CD4-positive, alpha-beta memory T cell (primary cell): ENCODE measurements at regions of chrX and their contacts with region 1.

Region 1: DNA sequence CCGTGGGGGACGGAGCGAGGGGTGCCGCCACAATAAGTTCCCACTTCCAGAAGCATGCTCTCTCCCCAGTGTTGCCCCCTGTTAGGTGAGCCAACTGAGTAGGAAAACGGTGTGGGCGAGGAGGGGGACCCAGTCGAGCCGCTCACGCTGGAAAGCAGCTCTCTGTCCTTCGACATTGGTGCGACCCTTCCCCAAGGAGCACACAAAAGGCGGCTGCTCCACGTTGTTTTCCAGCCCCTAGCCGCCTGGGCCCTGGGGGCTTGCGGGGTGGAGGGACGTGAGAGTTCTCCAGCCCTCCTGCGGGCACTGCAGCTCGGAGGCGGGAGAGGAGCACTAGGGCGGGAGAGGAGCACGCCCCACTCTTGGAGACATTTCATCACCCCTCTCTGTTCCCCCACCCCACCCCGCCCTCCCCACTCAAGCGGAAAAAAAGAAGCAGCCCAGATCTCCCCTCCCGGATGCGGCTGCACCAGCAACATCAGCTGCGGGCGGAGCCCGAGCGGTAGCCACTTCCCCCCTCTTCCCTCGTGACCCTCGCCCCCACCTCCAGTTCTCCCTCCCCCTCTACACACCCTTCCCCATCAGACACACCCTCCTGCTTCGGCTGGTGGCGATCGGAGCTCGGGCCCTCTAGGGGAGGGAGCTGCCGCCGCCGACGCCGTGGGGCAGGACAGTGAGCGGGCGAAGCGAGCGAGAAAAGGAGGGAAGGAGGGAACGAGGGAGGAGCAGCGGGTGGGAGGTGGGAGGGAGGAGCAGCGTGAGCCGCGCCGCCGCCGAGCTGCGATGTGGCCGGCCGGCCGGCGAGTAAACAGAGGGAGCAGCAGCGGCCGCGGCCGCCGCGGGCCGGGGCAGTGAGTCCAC is at the start of gene DOCK11:
- DNase-seq: peak; percentile 79 to 90 (median 82)
- H3K4me3 ChIP-seq: peak within 1 kb of the TSS; percentile 83 to 91
- H3K4me3 Mint-ChIP-seq: peak within 1 kb of the TSS; percentile 95 to 100 (median 99)
- H3K27ac ChIP-seq: peak within 1 kb of the TSS; percentile 83
- H3K27ac Mint-ChIP-seq: peak within 1 kb of the TSS; percentile 94 to 99 (median 98)
- H3K4me1 ChIP-seq: peaks cover 36% of the 10 kb centered on the region
- H3K4me1 Mint-ChIP-seq: peaks cover 10 to 41% (median 22%) of the 10 kb centered on the region in 4 donors
- H3K27me3 ChIP-seq: no peaks in the 10 kb centered on the region
- H3K27me3 Mint-ChIP-seq: no peaks in the 10 kb centered on the region
- total RNA-seq, gene DOCK11: 110 to 112 TPM

Region 2: GRCh38 chrX:118508635-118509034 is 13.3 kb after region 1 on chrX:
- CTCF ChIA-PET with region 1: interaction called, 5 read pairs
- POLR2A ChIA-PET with region 1: interaction called, 13 read pairs
- intact Hi-C with region 1: no loop called
- DNase-seq: no peak
- H3K4me3 ChIP-seq: no peak overlapping the region
- H3K4me3 Mint-ChIP-seq: peak overlapping the region in 3 of 8 donors; percentile 11 to 35 (median 17)
- H3K27ac ChIP-seq: no peak overlapping the region
- H3K27ac Mint-ChIP-seq: peak overlapping the region; percentile 0 to 83 (median 65)
- H3K4me1 ChIP-seq: peaks cover 91% of the 10 kb centered on the region
- H3K4me1 Mint-ChIP-seq: peaks cover 39 to 89% (median 67%) of the 10 kb centered on the region in 4 donors
- H3K27me3 ChIP-seq: no peaks in the 10 kb centered on the region
- H3K27me3 Mint-ChIP-seq: no peaks in the 10 kb centered on the region

Region 3: GRCh38 chrX:118528071-118528737 is 32.9 kb after region 1 on chrX:
- CTCF ChIA-PET with region 1: interaction called, 18 read pairs
- POLR2A ChIA-PET with region 1: interaction called, 289 read pairs
- intact Hi-C with region 1: loop called (anchors 1 kb)
- DNase-seq: peak; percentile 63 to 77 (median 70)
- H3K4me3 ChIP-seq: peak overlapping the region; percentile 49 to 53
- H3K4me3 Mint-ChIP-seq: peak overlapping the region; percentile 75 to 97 (median 94)
- H3K27ac ChIP-seq: peak overlapping the region; percentile 78
- H3K27ac Mint-ChIP-seq: peak overlapping the region; percentile 87 to 99 (median 95)
- H3K4me1 ChIP-seq: peaks cover 85% of the 10 kb centered on the region
- H3K4me1 Mint-ChIP-seq: peaks cover 47 to 86% (median 68%) of the 10 kb centered on the region in 4 donors
- H3K27me3 ChIP-seq: no peaks in the 10 kb centered on the region
- H3K27me3 Mint-ChIP-seq: no peaks in the 10 kb centered on the region

Region 4: GRCh38 chrX:118552121-118552900 is 57.0 kb after region 1 on chrX:
- CTCF ChIA-PET with region 1: interaction called, 5 read pairs
- POLR2A ChIA-PET with region 1: interaction called, 29 read pairs
- intact Hi-C with region 1: no loop called
- DNase-seq: no peak
- H3K4me3 ChIP-seq: no peak overlapping the region
- H3K4me3 Mint-ChIP-seq: peak overlapping the region in 1 of 8 donors; percentile 4
- H3K27ac ChIP-seq: no peak overlapping the region
- H3K27ac Mint-ChIP-seq: peak overlapping the region in 2 of 7 donors; percentile 24 to 63
- H3K4me1 ChIP-seq: peaks cover 13% of the 10 kb centered on the region
- H3K4me1 Mint-ChIP-seq: peaks cover 10 to 18% (median 12%) of the 10 kb centered on the region in 4 donors
- H3K27me3 ChIP-seq: no peaks in the 10 kb centered on the region
- H3K27me3 Mint-ChIP-seq: no peaks in the 10 kb centered on the region

Region 5: GRCh38 chrX:118823263-118824172 is 328.2 kb after region 1 on chrX and contains the start of gene ZCCHC12:
- CTCF ChIA-PET with region 1: no interaction called
- POLR2A ChIA-PET with region 1: no interaction called
- intact Hi-C with region 1: no loop called
- DNase-seq: peak; percentile 23 to 55 (median 28)
- H3K4me3 ChIP-seq: no peak within 1 kb of the TSS
- H3K4me3 Mint-ChIP-seq: peak within 1 kb of the TSS; percentile 67 to 89 (median 81)
- H3K27ac ChIP-seq: no peak within 1 kb of the TSS
- H3K27ac Mint-ChIP-seq: peak within 1 kb of the TSS in 1 of 7 donors; percentile 52
- H3K4me1 ChIP-seq: peaks cover 17% of the 10 kb centered on the region
- H3K4me1 Mint-ChIP-seq: peaks cover 7 to 24% (median 14%) of the 10 kb centered on the region in 4 donors
- H3K27me3 ChIP-seq: peaks cover 11% of the 10 kb centered on the region
- H3K27me3 Mint-ChIP-seq: peaks cover 15 to 40% of the 10 kb centered on the region in 2 donors
- total RNA-seq, gene ZCCHC12: not detected